ENCODE measurements at regions of chr21 and their contacts with region 1.

Region 1: GRCh38 chr21:44011980-44012527 is at the start of gene TRAPPC10:
- DNase-seq: peak; percentile 85 to 89
- ATAC-seq: peak; percentile 52 to 76 (median 66)
- H3K4me3 ChIP-seq: peak within 1 kb of the TSS; percentile 71
- H3K4me3 Mint-ChIP-seq: peak within 1 kb of the TSS; percentile 95
- H3K27ac ChIP-seq: peak within 1 kb of the TSS; percentile 87
- H3K27ac Mint-ChIP-seq: peak within 1 kb of the TSS; percentile 95
- H3K4me1 ChIP-seq: peaks cover 41% of the 10 kb centered on the region
- H3K4me1 Mint-ChIP-seq: peaks cover 59 to 62% of the 10 kb centered on the region in 2 donors
- H3K27me3 ChIP-seq: no peaks in the 10 kb centered on the region
- H3K27me3 Mint-ChIP-seq: no peaks in the 10 kb centered on the region
- CTCF ChIP-seq: no peak
- total RNA-seq, gene TRAPPC10: 187 to 232 (median 213) TPM

Region 2: GRCh38 chr21:44029460-44030087 is 17.5 kb after region 1 on chr21:
- intact Hi-C with region 1: loop called (anchors 2 kb)
- DNase-seq: no peak
- ATAC-seq: no peak
- H3K4me3 ChIP-seq: no peak overlapping the region
- H3K4me3 Mint-ChIP-seq: peak overlapping the region; percentile 45
- H3K27ac ChIP-seq: no peak overlapping the region
- H3K27ac Mint-ChIP-seq: peak overlapping the region; percentile 83 to 95
- H3K4me1 ChIP-seq: peaks cover 49% of the 10 kb centered on the region
- H3K4me1 Mint-ChIP-seq: peaks cover 84 to 91% of the 10 kb centered on the region in 2 donors
- H3K27me3 ChIP-seq: no peaks in the 10 kb centered on the region
- H3K27me3 Mint-ChIP-seq: no peaks in the 10 kb centered on the region
- CTCF ChIP-seq: no peak

Region 3: GRCh38 chr21:44065428-44065827 is 53.4 kb after region 1 on chr21:
- intact Hi-C with region 1: loop called (anchors 5 kb)
- DNase-seq: peak; percentile 74 to 97
- ATAC-seq: peak; percentile 89 to 96 (median 90)
- H3K4me3 ChIP-seq: no peak overlapping the region
- H3K4me3 Mint-ChIP-seq: peak overlapping the region; percentile 85
- H3K27ac ChIP-seq: peak overlapping the region; percentile 94
- H3K27ac Mint-ChIP-seq: peak overlapping the region; percentile 94 to 100
- H3K4me1 ChIP-seq: peaks cover 27% of the 10 kb centered on the region
- H3K4me1 Mint-ChIP-seq: peaks cover 56 to 61% of the 10 kb centered on the region in 2 donors
- H3K27me3 ChIP-seq: no peaks in the 10 kb centered on the region
- H3K27me3 Mint-ChIP-seq: no peaks in the 10 kb centered on the region
- CTCF ChIP-seq: no peak

Region 4: GRCh38 chr21:44083631-44084291 is 71.7 kb after region 1 on chr21:
- intact Hi-C with region 1: loop called (anchors 1 kb)
- DNase-seq: peak; percentile 71 to 91
- ATAC-seq: peak; percentile 62 to 82 (median 73)
- H3K4me3 ChIP-seq: peak overlapping the region; percentile 51
- H3K4me3 Mint-ChIP-seq: peak overlapping the region; percentile 94
- H3K27ac ChIP-seq: peak overlapping the region; percentile 95
- H3K27ac Mint-ChIP-seq: peak overlapping the region; percentile 98 to 99
- H3K4me1 ChIP-seq: peaks cover 95% of the 10 kb centered on the region
- H3K4me1 Mint-ChIP-seq: peaks cover 91 to 98% of the 10 kb centered on the region in 2 donors
- H3K27me3 ChIP-seq: no peaks in the 10 kb centered on the region
- H3K27me3 Mint-ChIP-seq: no peaks in the 10 kb centered on the region
- CTCF ChIP-seq: no peak

Region 5: GRCh38 chr21:44370027-44370735 is 358.1 kb after region 1 on chr21:
- intact Hi-C with region 1: loop called (anchors 10 kb)
- DNase-seq: no peak
- ATAC-seq: peak in 1 of 3 donors; percentile 48
- H3K4me3 ChIP-seq: no peak overlapping the region
- H3K4me3 Mint-ChIP-seq: no peak overlapping the region
- H3K27ac ChIP-seq: no peak overlapping the region
- H3K27ac Mint-ChIP-seq: no peak overlapping the region
- H3K4me1 ChIP-seq: peaks cover 20% of the 10 kb centered on the region
- H3K4me1 Mint-ChIP-seq: peaks cover 30 to 40% of the 10 kb centered on the region in 2 donors
- H3K27me3 ChIP-seq: peaks cover 6% of the 10 kb centered on the region
- H3K27me3 Mint-ChIP-seq: peaks cover 0 to 3% of the 10 kb centered on the region in 2 donors
- CTCF ChIP-seq: no peak